Mammary epithelial cell (primary cell): ENCODE measurements at regions of chr6 and their contacts with region 1.

Region 1: GRCh38 chr6:134840086-134840867 is 109.6 kb downstream of the ALDH8A1 start:
- DNase-seq: no peak
- H3K4me3 ChIP-seq: no peak overlapping the region
- H3K27ac ChIP-seq: no peak overlapping the region
- H3K4me1 ChIP-seq: no peaks in the 10 kb centered on the region
- H3K27me3 ChIP-seq: no peaks in the 10 kb centered on the region
- CTCF ChIP-seq: no peak

Region 2: GRCh38 chr6:134949927-134950326 is 109.7 kb after region 1 on chr6 and contains the start of gene ALDH8A1:
- CTCF ChIA-PET with region 1: no interaction called
- dilution Hi-C with region 1: loop called (anchors 10 kb)
- in situ Hi-C with region 1: loop called in 1 of 2 experiments (anchors 25 kb)
- intact Hi-C with region 1: no loop called
- DNase-seq: no peak
- H3K4me3 ChIP-seq: no peak within 1 kb of the TSS
- H3K27ac ChIP-seq: no peak within 1 kb of the TSS
- H3K4me1 ChIP-seq: no peaks in the 10 kb centered on the region
- H3K27me3 ChIP-seq: no peaks in the 10 kb centered on the region
- CTCF ChIP-seq: no peak
- total RNA-seq, gene ALDH8A1: 0.28 to 2.7 TPM